ENCODE measurements at regions of chr1 and their contacts with region 1.

Region 1: DNA sequence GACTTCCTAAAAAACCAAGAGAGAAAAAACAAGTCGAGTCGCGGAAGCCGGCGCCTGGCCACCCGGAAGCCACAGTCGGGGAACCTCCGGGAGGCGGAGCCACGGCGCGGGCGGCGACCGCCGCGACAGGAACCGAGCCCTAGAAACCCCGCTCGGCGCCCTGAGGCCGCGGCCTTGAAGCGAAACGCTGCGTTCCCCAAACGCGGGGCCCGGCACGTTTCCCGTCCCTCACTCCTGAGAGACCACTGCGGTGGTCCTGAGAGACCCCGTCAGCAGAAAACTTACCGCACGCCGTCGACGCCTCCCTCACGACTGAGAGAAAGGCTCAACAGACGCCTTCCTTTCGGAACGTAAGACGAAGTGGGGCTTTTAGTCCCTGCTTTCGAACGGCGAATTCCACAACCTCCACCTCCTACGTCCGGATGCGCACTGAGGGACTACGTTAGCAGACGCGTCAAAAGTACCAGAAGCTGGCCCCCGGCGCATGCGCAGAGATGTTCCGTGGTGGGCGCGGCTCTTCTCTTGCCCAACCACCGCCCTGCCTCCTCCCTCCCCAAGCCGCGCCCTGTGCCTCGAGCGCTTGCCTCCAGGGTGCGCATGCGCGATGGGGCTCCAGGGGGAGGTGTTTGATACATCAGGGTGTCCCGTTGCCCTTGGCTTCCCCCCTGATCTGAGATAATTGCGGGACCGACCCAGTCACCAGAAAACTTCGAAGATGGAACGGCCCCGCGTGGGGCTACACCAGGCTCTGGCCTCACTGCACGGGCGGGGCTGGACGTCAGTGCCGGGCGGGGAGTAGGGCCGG is at the start of gene RSRP1:
- DNase-seq: peak; percentile 100
- ATAC-seq: peak; percentile 91
- H3K4me3 Mint-ChIP-seq: peak within 1 kb of the TSS; percentile 95
- H3K27ac Mint-ChIP-seq: peak within 1 kb of the TSS; percentile 100
- H3K4me1 Mint-ChIP-seq: peaks cover 49% of the 10 kb centered on the region
- H3K27me3 Mint-ChIP-seq: no peaks in the 10 kb centered on the region
- total RNA-seq, gene RSRP1: 175 to 199 TPM

Region 2: DNA sequence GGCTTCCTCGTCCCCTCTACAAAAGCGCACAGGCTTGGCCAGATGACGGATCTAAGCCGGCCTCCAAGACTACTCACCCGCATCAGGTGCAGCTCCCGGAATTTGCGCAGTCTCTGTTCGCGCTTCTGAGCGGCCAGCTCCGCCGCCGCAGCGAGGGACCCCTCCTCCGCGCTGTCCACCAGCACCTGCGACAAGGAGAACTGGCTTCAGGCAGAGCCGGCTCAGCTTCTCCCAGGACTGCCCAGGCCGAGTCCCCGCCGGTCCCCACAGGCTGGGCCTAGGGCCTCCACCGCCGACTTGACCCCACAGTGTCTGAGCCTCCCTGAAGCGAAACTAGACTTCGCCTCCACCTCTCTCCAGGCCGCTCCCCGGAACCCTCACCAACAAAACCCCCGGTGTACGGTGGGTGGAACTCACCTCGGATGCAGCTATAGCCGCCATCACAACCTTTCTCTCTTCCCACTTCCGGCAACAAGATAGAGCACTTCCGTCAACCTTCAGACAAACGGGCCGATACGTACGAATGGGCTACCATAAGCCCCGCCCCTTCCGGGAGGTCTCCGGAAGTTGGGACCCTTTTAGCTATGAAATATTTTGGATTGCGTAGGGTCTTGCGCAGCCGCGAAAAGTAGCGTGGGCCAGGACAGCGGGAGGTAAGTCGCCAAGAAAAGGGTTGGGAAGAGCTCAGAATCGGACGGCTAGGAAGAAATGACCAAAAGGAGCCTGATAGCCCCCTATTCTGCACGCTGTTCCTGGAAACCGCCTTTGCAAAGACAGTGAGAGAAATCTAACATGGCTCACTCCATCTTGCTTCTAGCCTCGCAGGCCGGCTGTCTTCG is 15.0 kb before region 1 on chr1 and contains the start of gene SYF2:
- CTCF ChIA-PET with region 1: interaction called, 11 read pairs
- POLR2A ChIA-PET with region 1: interaction called, 113 read pairs
- DNase-seq: peak; percentile 95
- ATAC-seq: peak; percentile 94
- H3K4me3 Mint-ChIP-seq: no peak within 1 kb of the TSS
- H3K27ac Mint-ChIP-seq: no peak within 1 kb of the TSS
- H3K4me1 Mint-ChIP-seq: peaks cover 32% of the 10 kb centered on the region
- H3K27me3 Mint-ChIP-seq: no peaks in the 10 kb centered on the region
- total RNA-seq, gene SYF2: 36.8 to 37.1 TPM

Region 3: DNA sequence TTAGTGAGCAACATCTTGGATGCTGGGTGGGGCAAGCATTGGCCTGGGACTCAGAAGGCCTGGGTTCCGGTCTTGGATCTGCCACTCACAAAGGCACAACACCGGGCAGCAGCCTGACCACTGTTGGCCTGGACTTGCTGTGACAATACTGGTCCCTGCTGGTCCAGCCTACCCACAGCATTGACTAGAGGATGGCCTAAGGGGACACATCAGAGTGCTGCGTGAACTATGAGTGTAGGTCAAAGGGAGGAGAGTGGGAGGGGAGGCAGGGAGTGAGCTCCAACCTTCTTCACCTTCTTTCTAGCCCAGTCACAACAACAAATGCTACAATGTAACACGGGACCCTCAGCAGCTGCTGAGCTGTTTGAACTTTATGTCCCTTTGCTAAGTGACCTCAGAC is 122.0 kb after region 1 on chr1:
- CTCF ChIA-PET with region 1: no interaction called
- POLR2A ChIA-PET with region 1: no interaction called
- DNase-seq: no peak
- ATAC-seq: no peak
- H3K4me3 Mint-ChIP-seq: no peak overlapping the region
- H3K27ac Mint-ChIP-seq: no peak overlapping the region
- H3K4me1 Mint-ChIP-seq: no peaks in the 10 kb centered on the region
- H3K27me3 Mint-ChIP-seq: no peaks in the 10 kb centered on the region

Measured in activated CD8-positive, alpha-beta T cell treated with anti-CD3 and anti-CD28 coated beads, Interleukin-2, amount 10 ng/mL, durations not matched to agents 7 days and 5 days (primary cell).